ENCODE measurements at regions of chr19 and their contacts with region 1.

Region 1: DNA sequence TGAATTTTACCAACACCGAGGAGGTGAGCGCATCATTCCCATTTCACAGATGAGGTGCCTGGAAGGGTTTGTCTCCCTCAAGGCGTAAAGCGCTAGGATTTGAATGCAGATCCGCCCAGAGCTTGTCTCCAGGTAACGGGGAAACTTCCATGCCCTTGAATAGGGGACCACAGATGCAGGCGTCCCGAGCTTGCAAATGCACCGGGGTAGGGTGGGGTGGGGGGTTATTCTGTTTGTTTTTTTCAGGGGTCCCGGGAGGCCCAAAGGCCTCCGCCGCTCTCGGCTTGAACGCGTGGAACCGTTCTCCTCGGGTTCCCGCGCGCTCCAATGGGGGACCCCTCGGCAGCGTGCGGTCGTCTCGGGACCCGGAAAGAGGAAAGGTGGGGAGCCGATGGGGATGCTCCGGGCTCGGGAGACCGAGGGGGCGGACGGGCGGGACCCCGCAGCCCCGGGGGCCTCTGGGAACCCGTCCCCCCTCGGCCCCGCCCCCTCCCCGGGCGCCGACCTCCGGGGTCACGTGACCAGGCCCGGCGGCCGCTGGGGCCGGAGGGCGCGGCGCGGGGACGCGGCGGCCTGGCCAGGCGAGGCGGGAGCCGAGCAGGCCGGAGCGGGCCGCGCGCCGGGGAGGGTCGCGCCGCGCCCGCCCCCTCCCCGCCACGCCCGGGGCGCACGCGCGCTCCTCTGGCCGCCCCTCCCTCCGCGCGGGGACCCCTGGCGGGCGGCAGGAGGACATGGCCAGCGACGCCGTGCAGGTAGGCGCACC is at the start of gene PKN1:
- DNase-seq: peak; percentile 78 to 95 (median 92)
- ATAC-seq: peak; percentile 66
- H3K4me3 ChIP-seq: peak within 1 kb of the TSS; percentile 81
- H3K27ac ChIP-seq: peak within 1 kb of the TSS; percentile 83
- H3K4me1 ChIP-seq: peaks cover 17 to 44% of the 10 kb centered on the region in 2 experiments; a peak in 4 of 5 replicates
- H3K27me3 ChIP-seq: no peaks in the 10 kb centered on the region
- CTCF ChIP-seq: 0 out of 6 replicates have a peak, but pooled peaks of 1 of the 3 experiments have one; percentile 10
- EP300 ChIP-seq: no peak
- POLR2A ChIP-seq: 0 out of 2 replicates have a peak, but pooled peaks have one; percentile 40
- RAD21 ChIP-seq: no peak
- polyA plus RNA-seq, gene PKN1: 0.30 to 0.57 TPM

Region 2: DNA sequence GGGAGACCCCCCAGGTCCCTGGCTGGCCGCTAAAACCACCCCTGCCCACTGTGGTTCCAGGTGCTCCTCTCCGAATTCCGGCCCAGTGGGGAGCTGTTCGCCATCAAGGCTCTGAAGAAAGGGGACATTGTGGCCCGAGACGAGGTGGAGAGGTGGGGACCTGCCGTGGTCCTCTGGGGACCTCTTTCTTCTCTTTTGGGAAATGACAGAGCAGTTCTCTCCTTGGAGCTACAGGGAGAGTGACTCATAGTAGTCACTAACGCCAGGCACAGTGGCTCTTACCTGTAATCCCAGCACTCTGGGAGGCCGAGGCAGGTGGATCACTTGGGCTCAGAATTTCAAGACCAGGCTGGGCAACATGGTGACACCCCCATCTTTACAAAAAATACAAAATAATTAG is 34.8 kb after region 1 on chr19:
- CTCF ChIA-PET with region 1: interaction called, 3 read pairs
- POLR2A ChIA-PET with region 1: interaction called, 4 read pairs
- in situ Hi-C with region 1: no loop called
- intact Hi-C with region 1: loop called (anchors 5 kb)
- DNase-seq: peak; percentile 50 to 66 (median 59)
- ATAC-seq: peak; percentile 71
- H3K4me3 ChIP-seq: no peak overlapping the region
- H3K27ac ChIP-seq: no peak overlapping the region
- H3K4me1 ChIP-seq: peaks cover 4 to 36% of the 10 kb centered on the region in 2 experiments
- H3K27me3 ChIP-seq: no peaks in the 10 kb centered on the region
- CTCF ChIP-seq: peak; percentile 67 to 75 (median 68)
- EP300 ChIP-seq: no peak
- POLR2A ChIP-seq: no peak
- RAD21 ChIP-seq: peak; percentile 33 to 59; a peak in 3 of 4 replicates

Region 3: DNA sequence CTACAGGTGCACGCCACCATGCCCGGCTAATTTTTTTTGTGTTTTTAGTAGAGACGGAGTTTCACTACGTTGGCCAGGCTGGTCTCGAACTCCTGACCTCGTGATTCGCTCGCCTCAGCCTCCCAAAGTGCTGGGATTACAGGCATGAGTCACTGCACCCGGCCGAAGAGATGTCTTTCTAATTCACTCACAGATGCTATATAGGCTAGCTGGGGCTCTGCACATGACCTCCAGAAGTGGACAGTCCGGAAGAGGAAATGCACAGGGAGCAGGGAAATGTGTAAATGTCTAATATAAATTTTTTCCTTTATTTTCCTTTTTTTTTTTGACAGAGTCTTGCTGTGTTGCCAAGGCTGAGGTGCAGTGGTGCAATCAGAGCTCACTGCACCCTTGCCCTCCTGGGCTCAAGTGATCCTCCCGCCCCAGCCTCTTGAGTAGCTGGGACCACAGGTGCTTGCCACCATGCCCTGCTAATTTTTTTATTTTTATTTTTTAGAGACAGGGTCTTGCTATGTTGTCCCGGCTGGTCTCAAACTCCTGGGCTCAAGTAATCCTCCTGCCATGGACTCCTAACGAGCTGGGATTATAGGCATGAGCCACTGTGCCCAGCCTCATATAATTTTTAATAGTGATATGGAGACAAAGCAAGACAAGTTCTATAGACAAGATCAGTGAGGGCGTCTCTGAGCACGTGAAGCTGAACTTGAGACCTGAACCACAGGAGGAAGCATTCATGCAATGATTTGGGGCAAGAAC is 54.6 kb after region 1 on chr19:
- CTCF ChIA-PET with region 1: interaction called, 10 read pairs
- POLR2A ChIA-PET with region 1: no interaction called
- in situ Hi-C with region 1: no loop called
- intact Hi-C with region 1: no loop called
- DNase-seq: no peak
- ATAC-seq: no peak
- H3K4me3 ChIP-seq: no peak overlapping the region
- H3K27ac ChIP-seq: no peak overlapping the region
- H3K4me1 ChIP-seq: peaks cover under 1 to 2% of the 10 kb centered on the region in 2 experiments; a peak in 3 of 5 replicates
- H3K27me3 ChIP-seq: no peaks in the 10 kb centered on the region
- CTCF ChIP-seq: no peak
- EP300 ChIP-seq: no peak
- POLR2A ChIP-seq: no peak
- RAD21 ChIP-seq: no peak

Region 4: DNA sequence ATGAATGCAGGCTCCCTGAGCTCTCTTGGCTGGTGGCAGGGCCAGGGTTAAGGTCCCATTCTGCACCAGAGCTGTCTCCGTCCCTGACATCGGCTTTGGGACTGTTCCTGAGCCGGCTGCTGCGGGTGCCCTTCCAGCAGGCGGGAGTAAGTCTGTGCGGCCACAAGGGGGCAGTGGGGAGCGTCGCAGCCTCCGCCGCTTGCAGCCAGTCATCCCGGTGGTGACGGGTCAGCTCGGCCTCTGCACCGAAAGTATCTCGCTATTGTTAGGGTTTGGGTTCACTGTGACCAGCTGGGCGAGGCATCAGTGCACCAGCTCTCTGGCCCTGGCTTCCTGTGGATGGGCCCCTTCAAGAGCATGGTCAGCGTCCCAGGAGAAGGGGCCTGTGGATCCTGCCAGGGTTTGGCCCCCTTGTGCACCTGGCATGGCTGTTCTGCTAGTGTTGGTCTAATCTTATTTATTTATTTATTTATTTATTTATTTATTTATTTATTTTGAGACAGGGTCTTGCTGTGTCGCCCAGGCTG is 123.8 kb after region 1 on chr19:
- CTCF ChIA-PET with region 1: no interaction called
- POLR2A ChIA-PET with region 1: no interaction called
- in situ Hi-C with region 1: no loop called
- intact Hi-C with region 1: loop called (anchors 10 kb)
- DNase-seq: peak; percentile 81 to 88 (median 82)
- ATAC-seq: peak; percentile 94
- H3K4me3 ChIP-seq: no peak overlapping the region
- H3K27ac ChIP-seq: peak overlapping the region; percentile 43; the same call in 1 of the 3 replicates
- H3K4me1 ChIP-seq: peaks cover 12 to 74% of the 10 kb centered on the region in 2 experiments; a peak in 4 of 5 replicates
- H3K27me3 ChIP-seq: no peaks in the 10 kb centered on the region
- CTCF ChIP-seq: peak; percentile 90 to 97 (median 96)
- EP300 ChIP-seq: no peak
- POLR2A ChIP-seq: no peak
- RAD21 ChIP-seq: peak; percentile 36 to 74; a peak in 3 of 4 replicates